ENCODE measurements at regions of chr5 and their contacts with region 1.

Region 1: DNA sequence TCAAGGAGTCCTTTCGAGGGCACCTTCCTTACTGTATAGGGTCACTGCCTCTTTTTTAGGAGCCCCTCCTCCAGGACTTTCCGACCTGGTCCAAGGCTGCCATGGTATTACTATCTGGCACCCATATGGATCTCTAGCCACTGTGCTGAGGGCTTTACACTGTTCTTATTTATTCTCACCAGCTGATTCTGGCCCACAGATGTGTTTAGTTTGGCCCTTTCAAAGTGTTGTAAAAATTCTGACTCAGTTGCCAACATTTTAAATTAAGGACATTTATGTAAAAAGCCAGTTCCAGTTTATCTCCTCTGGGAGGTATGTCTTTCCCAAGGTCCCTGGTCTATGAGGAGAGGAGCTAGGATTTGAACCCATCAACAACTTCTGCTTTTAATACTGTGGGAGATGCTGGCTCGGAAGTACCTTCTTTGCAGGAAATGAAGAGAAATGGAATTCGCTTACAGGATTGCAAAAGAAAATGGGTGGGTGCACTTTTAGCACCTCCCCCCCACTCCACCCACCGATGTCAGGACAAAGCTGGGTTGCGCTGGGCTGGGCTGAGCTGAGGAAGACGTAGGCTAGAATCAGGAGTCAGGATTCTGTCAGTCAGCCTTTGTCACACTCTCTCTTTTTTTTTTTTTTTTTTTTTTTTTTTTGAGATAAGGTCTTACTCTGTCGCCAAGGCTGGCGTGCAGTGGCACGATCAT is 7.8 kb downstream of the JADE2 start:
- DNase-seq: no peak
- H3K4me3 ChIP-seq: no peak overlapping the region
- H3K27ac ChIP-seq: no peak overlapping the region
- H3K4me1 ChIP-seq: peaks cover 19 to 41% (median 31%) of the 10 kb centered on the region in 4 experiments
- H3K27me3 ChIP-seq: no peaks in the 10 kb centered on the region
- CTCF ChIP-seq: no peak
- EP300 ChIP-seq: no peak
- POLR2A ChIP-seq: no peak
- RAD21 ChIP-seq: no peak

Region 2: GRCh38 chr5:134296213-134296612 is 237.1 kb before region 1 on chr5:
- CTCF ChIA-PET with region 1: no interaction called
- POLR2A ChIA-PET with region 1: no interaction called
- DNase-seq: no peak
- H3K4me3 ChIP-seq: no peak overlapping the region
- H3K27ac ChIP-seq: no peak overlapping the region
- H3K4me1 ChIP-seq: no peaks in the 10 kb centered on the region
- H3K27me3 ChIP-seq: no peaks in the 10 kb centered on the region
- CTCF ChIP-seq: no peak
- EP300 ChIP-seq: no peak
- POLR2A ChIP-seq: no peak
- RAD21 ChIP-seq: no peak

Region 3: GRCh38 chr5:134547579-134547978 is 14.3 kb after region 1 on chr5:
- CTCF ChIA-PET with region 1: interaction called, 121 read pairs
- POLR2A ChIA-PET with region 1: interaction called, 74 read pairs
- DNase-seq: no peak
- H3K4me3 ChIP-seq: no peak overlapping the region
- H3K27ac ChIP-seq: no peak overlapping the region
- H3K4me1 ChIP-seq: peaks cover 3 to 7% (median 5%) of the 10 kb centered on the region in 4 experiments; a peak in 5 of 7 replicates
- H3K27me3 ChIP-seq: no peaks in the 10 kb centered on the region
- CTCF ChIP-seq: no peak
- EP300 ChIP-seq: no peak
- POLR2A ChIP-seq: no peak
- RAD21 ChIP-seq: no peak

Region 4: DNA sequence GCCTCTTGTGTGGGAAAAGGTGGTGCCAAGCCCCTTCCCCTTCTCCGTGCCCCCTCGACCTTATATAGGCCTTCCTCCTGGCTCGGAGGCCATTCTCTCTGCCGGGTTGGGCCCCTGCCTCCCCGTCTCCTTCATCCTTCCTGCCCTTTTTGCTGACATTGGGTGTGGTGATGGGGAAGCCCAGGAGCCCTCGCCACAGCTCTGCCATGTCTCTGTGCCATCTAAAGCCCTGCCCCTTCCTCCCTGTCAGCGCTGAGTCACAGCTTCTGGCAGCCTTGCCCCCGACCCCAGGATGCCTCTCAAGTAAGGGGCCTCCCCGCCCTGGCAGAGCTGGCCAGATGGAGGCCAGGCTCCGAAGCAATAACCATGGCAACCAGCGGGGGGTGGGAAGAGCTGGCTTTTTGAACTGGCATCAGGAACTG is 22.6 kb after region 1 on chr5:
- CTCF ChIA-PET with region 1: interaction called, 89 read pairs
- POLR2A ChIA-PET with region 1: interaction called, 4 read pairs
- DNase-seq: peak in 1 of 2 experiments; percentile 72
- H3K4me3 ChIP-seq: no peak overlapping the region
- H3K27ac ChIP-seq: no peak overlapping the region
- H3K4me1 ChIP-seq: peaks cover 0 to 9% (median 1%) of the 10 kb centered on the region in 4 experiments; a peak in 4 of 7 replicates
- H3K27me3 ChIP-seq: no peaks in the 10 kb centered on the region
- CTCF ChIP-seq: peak; percentile 12 to 24 (median 15); a peak in 3 of 4 replicates
- EP300 ChIP-seq: no peak
- POLR2A ChIP-seq: no peak
- RAD21 ChIP-seq: peak; percentile 5 to 28; a peak in 1 of 4 replicates

Region 5: GRCh38 chr5:134568761-134569695 is 35.8 kb after region 1 on chr5:
- CTCF ChIA-PET with region 1: interaction called, 12 read pairs
- POLR2A ChIA-PET with region 1: no interaction called
- DNase-seq: no peak
- H3K4me3 ChIP-seq: no peak overlapping the region
- H3K27ac ChIP-seq: no peak overlapping the region; the same call in 1 of the 2 replicates
- H3K4me1 ChIP-seq: no peaks in the 10 kb centered on the region
- H3K27me3 ChIP-seq: no peaks in the 10 kb centered on the region
- CTCF ChIP-seq: no peak
- EP300 ChIP-seq: no peak
- POLR2A ChIP-seq: no peak
- RAD21 ChIP-seq: no peak